CD4-positive, alpha-beta T cell (primary cell): ENCODE measurements at regions of chr5 and their contacts with region 1.

Region 1: GRCh38 chr5:34474573-34475021 is 181.5 kb upstream of the RAI14 start:
- DNase-seq: peak in 4 of 14 experiments; percentile 15 to 56 (median 42)
- ATAC-seq: peak; percentile 46
- H3K4me3 ChIP-seq: no peak overlapping the region
- H3K4me3 Mint-ChIP-seq: no peak overlapping the region
- H3K27ac ChIP-seq: no peak overlapping the region
- H3K27ac Mint-ChIP-seq: no peak overlapping the region
- H3K4me1 ChIP-seq: no peaks in the 10 kb centered on the region
- H3K4me1 Mint-ChIP-seq: no peaks in the 10 kb centered on the region
- H3K27me3 ChIP-seq: no peaks in the 10 kb centered on the region
- H3K27me3 Mint-ChIP-seq: peaks cover 18% of the 10 kb centered on the region
- CTCF ChIP-seq: peak; percentile 95

Region 2: DNA sequence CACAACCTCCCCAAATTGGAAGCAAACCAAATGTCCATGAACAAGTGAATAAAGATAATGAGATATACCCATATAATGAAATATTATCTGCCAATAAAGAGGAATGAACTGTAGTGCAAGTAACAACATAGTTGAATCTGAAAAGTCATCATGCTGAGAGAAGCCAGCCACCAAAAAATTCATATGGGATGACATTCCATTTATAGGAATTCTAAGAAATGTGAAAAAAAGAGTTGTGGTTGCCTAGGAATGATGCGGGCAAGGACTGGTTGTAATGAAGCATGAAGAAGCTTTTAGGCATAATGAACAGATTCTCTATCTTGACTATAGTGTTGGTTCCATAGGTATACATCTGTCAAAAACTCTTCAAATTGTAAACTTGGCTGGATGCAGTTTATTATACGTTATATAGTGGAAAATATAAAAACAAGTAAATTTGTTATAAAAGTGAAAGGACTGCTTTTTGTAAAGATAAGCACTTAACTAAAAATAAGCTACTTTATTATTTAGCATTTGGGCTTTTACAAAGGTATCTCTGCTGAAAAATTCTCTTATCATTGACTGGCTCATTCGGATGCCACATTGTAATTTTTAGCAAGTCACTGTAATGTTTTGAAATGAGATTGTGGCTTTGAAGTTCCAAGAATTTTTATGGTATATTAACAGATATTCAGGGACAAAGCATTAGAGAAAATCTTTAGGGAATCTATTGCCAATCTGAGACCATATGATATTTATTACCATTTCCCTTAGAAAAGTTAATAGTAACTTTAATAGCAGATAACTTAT is 343.2 kb after region 1 on chr5:
- CTCF ChIA-PET with region 1: no interaction called
- POLR2A ChIA-PET with region 1: no interaction called
- intact Hi-C with region 1: no loop called
- DNase-seq: no peak
- ATAC-seq: no peak
- H3K4me3 ChIP-seq: no peak overlapping the region
- H3K4me3 Mint-ChIP-seq: no peak overlapping the region
- H3K27ac ChIP-seq: no peak overlapping the region
- H3K27ac Mint-ChIP-seq: no peak overlapping the region
- H3K4me1 ChIP-seq: no peaks in the 10 kb centered on the region
- H3K4me1 Mint-ChIP-seq: no peaks in the 10 kb centered on the region
- H3K27me3 ChIP-seq: no peaks in the 10 kb centered on the region
- H3K27me3 Mint-ChIP-seq: no peaks in the 10 kb centered on the region
- CTCF ChIP-seq: no peak

Region 3: DNA sequence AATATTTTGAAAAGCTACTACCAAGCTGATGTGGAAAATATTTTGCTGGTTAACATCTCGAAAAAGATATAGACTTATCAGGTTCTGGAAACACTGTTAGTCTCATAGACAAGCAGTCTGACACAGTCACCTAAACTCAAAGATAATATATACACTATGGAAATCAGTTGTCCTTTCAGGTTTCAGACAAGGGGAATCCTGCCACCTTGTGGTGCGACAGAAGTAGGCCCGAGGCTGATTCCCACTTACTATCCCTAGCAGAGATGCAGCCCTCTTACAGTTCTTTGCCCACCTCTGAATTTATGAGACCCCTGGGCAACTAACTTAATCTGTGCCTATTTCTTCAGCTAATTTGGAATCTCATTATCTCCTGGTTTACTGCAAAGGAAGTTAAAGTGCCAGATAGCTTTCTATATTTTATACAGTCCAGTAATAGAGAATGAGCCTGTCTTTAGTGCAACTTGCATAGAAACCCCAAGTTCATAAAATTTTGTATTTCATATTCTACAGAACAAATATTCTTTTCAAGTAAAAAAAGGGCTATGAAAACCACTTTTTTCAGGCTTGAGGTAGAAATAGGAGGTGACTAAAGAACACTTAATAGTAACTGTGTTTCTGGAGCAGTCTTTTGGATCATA is 423.8 kb after region 1 on chr5:
- CTCF ChIA-PET with region 1: no interaction called
- POLR2A ChIA-PET with region 1: no interaction called
- intact Hi-C with region 1: loop called (anchors 1 to 5 kb)
- DNase-seq: peak; percentile 38 to 78 (median 53)
- ATAC-seq: peak; percentile 73
- H3K4me3 ChIP-seq: no peak overlapping the region
- H3K4me3 Mint-ChIP-seq: no peak overlapping the region
- H3K27ac ChIP-seq: no peak overlapping the region
- H3K27ac Mint-ChIP-seq: no peak overlapping the region
- H3K4me1 ChIP-seq: no peaks in the 10 kb centered on the region
- H3K4me1 Mint-ChIP-seq: no peaks in the 10 kb centered on the region
- H3K27me3 ChIP-seq: no peaks in the 10 kb centered on the region
- H3K27me3 Mint-ChIP-seq: no peaks in the 10 kb centered on the region
- CTCF ChIP-seq: peak; percentile 84